BJ (cell line): ENCODE measurements at regions of chr11 and their contacts with region 1.

Region 1: GRCh38 chr11:27698872-27699474 is 1.3 kb downstream of the BDNF start:
- DNase-seq: peak; percentile 49
- H3K4me3 ChIP-seq: peak overlapping the region; percentile 96
- H3K27me3 ChIP-seq: no peaks in the 10 kb centered on the region
- CTCF ChIP-seq: peak; percentile 95

Region 2: GRCh38 chr11:27254729-27255446 is 444.1 kb before region 1 on chr11:
- CTCF ChIA-PET with region 1: no interaction called
- POLR2A ChIA-PET with region 1: no interaction called
- DNase-seq: peak; percentile 88
- H3K4me3 ChIP-seq: no peak overlapping the region
- H3K27me3 ChIP-seq: no peaks in the 10 kb centered on the region
- CTCF ChIP-seq: no peak

Region 3: GRCh38 chr11:27934830-27935145 is 235.8 kb after region 1 on chr11:
- CTCF ChIA-PET with region 1: interaction called, 3 read pairs
- POLR2A ChIA-PET with region 1: interaction called, 14 read pairs
- DNase-seq: peak; percentile 76
- H3K4me3 ChIP-seq: no peak overlapping the region
- H3K27me3 ChIP-seq: no peaks in the 10 kb centered on the region
- CTCF ChIP-seq: no peak

Region 4: GRCh38 chr11:28529540-28530410 is 830.8 kb after region 1 on chr11:
- CTCF ChIA-PET with region 1: interaction called, 20 read pairs
- POLR2A ChIA-PET with region 1: interaction called, 7 read pairs
- DNase-seq: no peak
- H3K4me3 ChIP-seq: no peak overlapping the region
- H3K27me3 ChIP-seq: no peaks in the 10 kb centered on the region
- CTCF ChIP-seq: peak; percentile 36

Region 5: GRCh38 chr11:28674433-28675103 is 975.6 kb after region 1 on chr11:
- CTCF ChIA-PET with region 1: interaction called, 16 read pairs
- POLR2A ChIA-PET with region 1: interaction called, 4 read pairs
- DNase-seq: peak; percentile 94
- H3K4me3 ChIP-seq: no peak overlapping the region
- H3K27me3 ChIP-seq: no peaks in the 10 kb centered on the region
- CTCF ChIP-seq: peak; percentile 65